Activated CD8-positive, alpha-beta T cell treated with anti-CD3 and anti-CD28 coated beads for 36 hours (primary cell): ENCODE measurements at regions of chr12 and their contacts with region 1.

Region 1: DNA sequence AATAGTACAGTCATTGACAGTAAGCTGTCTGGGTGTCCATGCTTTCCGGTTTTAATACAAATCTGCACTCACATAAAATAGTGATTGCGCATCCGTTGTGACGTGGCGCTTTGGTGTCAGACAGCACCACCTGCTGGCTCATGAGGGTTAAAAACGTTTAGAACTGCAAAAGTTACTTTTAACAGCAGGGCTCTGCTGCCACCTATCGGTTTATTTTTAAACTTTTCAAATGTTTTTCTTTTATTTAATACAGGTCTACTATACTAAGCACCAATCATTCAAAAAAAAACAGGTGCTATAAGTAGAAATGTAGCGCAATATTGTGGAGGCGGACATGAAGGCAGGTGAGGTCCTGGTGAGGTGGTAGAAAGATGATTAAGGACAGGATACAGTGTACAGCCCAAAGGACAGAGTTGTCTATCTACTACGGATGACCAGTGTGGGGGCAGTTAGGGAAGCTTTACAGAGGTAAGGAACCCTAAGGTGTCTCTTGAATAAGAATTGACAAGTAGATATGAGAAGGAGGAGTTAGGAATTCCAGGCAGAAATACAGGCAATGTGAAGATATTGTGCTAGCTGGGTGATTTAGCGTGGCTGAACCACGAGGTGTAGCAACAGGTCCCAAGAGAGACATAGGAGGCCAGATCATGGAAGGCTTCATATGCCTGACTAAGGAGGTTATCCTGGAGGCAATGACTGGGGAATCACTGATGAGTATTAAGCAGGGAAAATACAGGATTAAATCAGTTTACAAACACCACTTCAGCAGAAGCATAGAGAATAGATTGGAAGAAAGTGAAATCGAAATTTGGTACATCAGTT is 91.5 kb upstream of the PRB2 start:
- DNase-seq: peak; percentile 89
- ATAC-seq: peak; percentile 95
- H3K4me3 Mint-ChIP-seq: no peak overlapping the region
- H3K27ac Mint-ChIP-seq: no peak overlapping the region
- H3K4me1 Mint-ChIP-seq: peaks cover 2% of the 10 kb centered on the region
- H3K27me3 Mint-ChIP-seq: no peaks in the 10 kb centered on the region
- CTCF ChIP-seq: peak; percentile 99

Region 2: GRCh38 chr12:10771132-10771733 is 715.6 kb before region 1 on chr12:
- CTCF ChIA-PET with region 1: interaction called, 69 read pairs
- POLR2A ChIA-PET with region 1: no interaction called
- intact Hi-C with region 1: loop called (anchors 2 kb)
- DNase-seq: no peak
- ATAC-seq: peak; percentile 58
- H3K4me3 Mint-ChIP-seq: no peak overlapping the region
- H3K27ac Mint-ChIP-seq: no peak overlapping the region
- H3K4me1 Mint-ChIP-seq: no peaks in the 10 kb centered on the region
- H3K27me3 Mint-ChIP-seq: peaks cover 27% of the 10 kb centered on the region
- CTCF ChIP-seq: peak; percentile 61

Region 3: GRCh38 chr12:11228296-11228879 is 258.4 kb before region 1 on chr12:
- CTCF ChIA-PET with region 1: interaction called, 51 read pairs
- POLR2A ChIA-PET with region 1: no interaction called
- intact Hi-C with region 1: loop called (anchors 2 kb)
- DNase-seq: peak; percentile 61
- ATAC-seq: peak; percentile 74
- H3K4me3 Mint-ChIP-seq: no peak overlapping the region
- H3K27ac Mint-ChIP-seq: no peak overlapping the region
- H3K4me1 Mint-ChIP-seq: no peaks in the 10 kb centered on the region
- H3K27me3 Mint-ChIP-seq: no peaks in the 10 kb centered on the region
- CTCF ChIP-seq: peak; percentile 57

Region 4: DNA sequence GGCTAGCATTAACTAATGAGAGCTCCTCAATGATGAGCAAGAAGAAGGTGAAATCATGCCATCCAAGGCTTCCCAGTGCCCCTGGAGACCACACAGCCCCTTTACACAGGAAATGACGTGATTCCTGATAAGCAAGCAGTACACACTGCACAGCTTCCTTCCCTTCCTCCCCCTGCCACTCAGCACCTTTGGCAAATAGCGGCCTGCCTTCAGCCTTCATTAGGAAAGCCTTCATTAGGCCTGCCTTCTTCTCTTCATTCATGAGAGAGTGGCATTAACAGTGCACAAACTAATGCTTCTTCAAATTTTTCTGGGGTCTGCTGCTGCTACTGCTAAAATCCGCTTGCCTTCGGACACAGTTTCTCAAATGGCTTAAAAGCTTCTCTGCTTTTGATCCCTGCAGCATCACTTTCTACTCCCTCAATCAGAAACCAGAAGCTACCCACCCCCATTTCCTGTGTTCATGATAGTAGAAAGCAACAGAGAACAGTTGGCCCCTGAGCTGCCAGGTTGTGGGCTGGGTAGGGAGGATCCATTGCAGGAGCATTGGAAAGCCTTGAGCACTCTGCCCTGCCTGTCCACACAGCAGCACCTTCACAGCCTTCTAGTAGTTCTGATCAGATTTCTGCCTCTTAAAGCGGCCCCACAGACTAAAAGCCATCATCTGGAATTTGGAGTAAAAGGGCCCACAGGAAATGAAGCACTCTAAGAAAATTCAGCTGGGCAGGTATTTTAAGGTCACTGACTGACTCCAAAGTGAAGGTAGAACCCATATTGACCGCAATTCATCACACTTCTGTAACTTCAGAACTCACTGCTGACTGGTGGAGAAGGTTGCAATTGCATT is 58.9 kb after region 1 on chr12:
- CTCF ChIA-PET with region 1: interaction called, 17 read pairs
- POLR2A ChIA-PET with region 1: no interaction called
- intact Hi-C with region 1: no loop called
- DNase-seq: peak; percentile 68
- ATAC-seq: peak; percentile 82
- H3K4me3 Mint-ChIP-seq: peak overlapping the region; percentile 72
- H3K27ac Mint-ChIP-seq: peak overlapping the region; percentile 97
- H3K4me1 Mint-ChIP-seq: peaks cover 51% of the 10 kb centered on the region
- H3K27me3 Mint-ChIP-seq: no peaks in the 10 kb centered on the region
- CTCF ChIP-seq: peak; percentile 25

Region 5: GRCh38 chr12:11862798-11863197 is 376.0 kb after region 1 on chr12:
- CTCF ChIA-PET with region 1: no interaction called
- POLR2A ChIA-PET with region 1: no interaction called
- intact Hi-C with region 1: no loop called
- DNase-seq: no peak
- ATAC-seq: no peak
- H3K4me3 Mint-ChIP-seq: no peak overlapping the region
- H3K27ac Mint-ChIP-seq: no peak overlapping the region
- H3K4me1 Mint-ChIP-seq: peaks cover 11% of the 10 kb centered on the region
- H3K27me3 Mint-ChIP-seq: no peaks in the 10 kb centered on the region
- CTCF ChIP-seq: no peak